ENCODE measurements at regions of chr4 and their contacts with region 1.

Region 1: DNA sequence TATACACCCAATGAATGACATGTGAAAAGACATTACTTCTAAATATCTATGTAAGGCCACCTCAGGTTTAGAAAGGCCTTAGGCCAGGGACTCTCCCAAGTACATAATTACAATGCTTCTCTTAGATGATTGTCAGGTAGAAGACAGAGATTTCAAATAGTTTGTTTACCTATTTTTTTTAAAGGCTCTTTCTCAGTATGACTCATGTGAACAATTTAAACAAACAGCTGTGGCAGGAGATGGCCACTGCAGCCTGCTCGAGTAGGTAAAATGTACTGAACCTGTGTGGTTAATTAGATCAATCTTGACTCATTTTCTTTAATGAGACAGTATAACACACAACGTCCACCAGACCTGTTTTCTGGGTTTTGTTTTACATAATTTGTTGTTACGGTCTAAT is 50.2 kb downstream of the LEF1 start:
- DNase-seq: peak; percentile 66
- ATAC-seq: peak; percentile 85
- H3K4me3 ChIP-seq: no peak overlapping the region; the same call in 1 of the 2 replicates
- H3K27ac ChIP-seq: peak overlapping the region; percentile 35; the same call in 1 of the 2 replicates
- H3K4me1 ChIP-seq: peaks cover 29% of the 10 kb centered on the region
- H3K27me3 ChIP-seq: no peaks in the 10 kb centered on the region
- CTCF ChIP-seq: no peak
- EP300 ChIP-seq: peak; percentile 85
- POLR2A ChIP-seq: no peak
- RAD21 ChIP-seq: no peak

Region 2: GRCh38 chr4:108141213-108141950 is 22.9 kb after region 1 on chr4:
- CTCF ChIA-PET with region 1: interaction called, 4 read pairs
- POLR2A ChIA-PET with region 1: interaction called, 4 read pairs
- RAD21 ChIA-PET with region 1: interaction called, 11 read pairs
- SMC1A ChIA-PET with region 1: interaction called, 44 read pairs
- in situ Hi-C with region 1: no loop called
- intact Hi-C with region 1: no loop called
- DNase-seq: no peak
- ATAC-seq: peak; percentile 69
- H3K4me3 ChIP-seq: no peak overlapping the region
- H3K27ac ChIP-seq: no peak overlapping the region
- H3K4me1 ChIP-seq: no peaks in the 10 kb centered on the region
- H3K27me3 ChIP-seq: no peaks in the 10 kb centered on the region
- CTCF ChIP-seq: no peak
- EP300 ChIP-seq: no peak; a peak in 1 of 4 replicates
- POLR2A ChIP-seq: no peak
- RAD21 ChIP-seq: no peak

Region 3: DNA sequence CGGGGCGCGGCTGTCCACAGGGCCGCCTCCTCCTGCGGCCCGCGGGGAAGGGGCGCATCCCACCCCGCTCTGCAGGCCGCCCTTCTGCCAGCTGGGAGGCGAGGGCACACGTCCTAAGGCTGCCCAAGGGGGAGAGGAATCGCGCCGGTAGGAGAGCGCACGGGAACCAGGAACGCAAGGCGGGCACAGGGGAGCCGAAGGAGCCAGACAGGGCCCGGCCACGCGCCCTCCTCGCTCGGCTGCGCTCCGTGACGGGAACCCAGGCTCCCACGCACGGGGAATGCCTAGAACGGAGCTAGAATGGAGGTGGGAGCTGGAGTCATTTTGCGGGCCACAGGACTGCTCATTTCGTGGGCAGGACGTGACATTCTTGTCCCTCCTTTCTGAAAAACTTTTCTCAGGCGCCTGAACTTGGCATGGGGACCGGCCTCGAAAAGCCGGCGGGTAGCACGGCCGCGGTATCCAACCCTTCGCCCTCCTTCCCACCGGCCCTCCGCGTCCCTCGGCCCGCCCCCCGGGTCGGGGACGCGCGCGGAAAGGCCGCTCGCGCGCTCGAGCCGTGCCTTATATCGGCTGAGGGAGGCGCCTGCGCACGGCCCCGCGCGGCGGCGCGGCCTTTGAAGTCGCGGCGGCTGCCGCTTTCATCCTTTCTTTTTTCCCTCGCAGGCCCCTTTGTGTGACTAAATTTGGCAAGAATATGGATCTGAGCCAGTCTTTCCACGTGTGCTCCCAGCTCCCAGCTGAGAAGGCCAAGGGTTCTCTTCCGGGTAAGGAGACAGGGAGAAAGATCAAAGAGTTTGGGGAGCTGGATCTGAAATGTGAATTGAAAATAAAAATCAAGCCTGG is 54.5 kb after region 1 on chr4:
- CTCF ChIA-PET with region 1: interaction called, 4 read pairs
- POLR2A ChIA-PET with region 1: no interaction called
- RAD21 ChIA-PET with region 1: interaction called, 8 read pairs
- SMC1A ChIA-PET with region 1: interaction called, 4 read pairs
- in situ Hi-C with region 1: no loop called
- intact Hi-C with region 1: loop called (anchors 5 kb)
- DNase-seq: no peak
- ATAC-seq: peak; percentile 71
- H3K4me3 ChIP-seq: peak overlapping the region; percentile 71
- H3K27ac ChIP-seq: no peak overlapping the region
- H3K4me1 ChIP-seq: 0 out of 2 replicates have a peak, but pooled peaks cover 3% of the 10 kb centered on the region
- H3K27me3 ChIP-seq: peaks cover 11 to 31% of the 10 kb centered on the region in 2 experiments
- CTCF ChIP-seq: no peak
- EP300 ChIP-seq: no peak
- POLR2A ChIP-seq: peak; percentile 62
- RAD21 ChIP-seq: no peak

Measured in GM12878 (cell line).